ENCODE measurements at regions of chr15 and their contacts with region 1.

Region 1: GRCh38 chr15:92881802-92882696 is 18.1 kb upstream of the CHD2 start:
- DNase-seq: peak; percentile 98
- H3K4me3 Mint-ChIP-seq: peak overlapping the region; percentile 84
- H3K27ac Mint-ChIP-seq: peak overlapping the region; percentile 95
- H3K4me1 Mint-ChIP-seq: peaks cover 54% of the 10 kb centered on the region
- H3K27me3 Mint-ChIP-seq: no peaks in the 10 kb centered on the region

Region 2: DNA sequence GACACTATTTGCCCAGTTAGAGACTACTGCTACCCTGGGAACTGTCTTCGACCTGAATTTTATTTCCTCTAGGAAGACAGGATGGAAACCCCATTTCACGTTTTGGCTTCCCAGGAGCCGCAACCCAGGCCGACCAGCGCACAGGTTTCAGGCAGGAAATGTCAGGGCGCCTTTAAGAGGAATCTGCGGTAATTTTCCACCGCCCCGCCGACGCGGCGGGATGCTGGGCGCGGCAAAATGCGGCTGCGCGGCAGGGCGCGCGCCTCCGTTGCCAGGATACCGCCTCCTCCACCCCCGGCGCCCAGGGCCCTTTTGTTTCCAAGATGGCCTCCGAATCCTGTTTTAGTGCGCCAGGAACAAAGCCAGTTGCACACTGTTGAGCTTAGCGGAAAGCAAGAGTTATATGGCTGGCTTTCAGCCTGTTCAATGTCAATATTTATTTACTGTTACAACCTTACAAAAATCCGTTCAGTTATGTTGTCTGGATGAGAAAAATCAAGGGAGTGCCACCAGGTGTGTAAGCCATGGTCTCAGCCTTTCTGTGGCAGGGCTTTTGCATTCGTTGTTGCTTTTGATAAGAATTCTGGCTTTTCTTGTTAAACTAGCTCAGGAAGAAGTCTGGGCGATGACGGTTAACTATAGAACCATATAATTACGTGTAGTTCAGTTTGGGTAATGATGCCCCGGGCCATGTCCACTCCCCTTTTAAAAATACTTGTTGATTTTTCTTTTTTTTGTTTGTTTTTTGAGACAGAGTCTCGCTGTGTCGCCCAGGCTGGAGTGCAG is 61.6 kb before region 1 on chr15:
- CTCF ChIA-PET with region 1: interaction called, 4 read pairs
- POLR2A ChIA-PET with region 1: interaction called, 18 read pairs
- DNase-seq: peak; percentile 89
- H3K4me3 Mint-ChIP-seq: peak overlapping the region; percentile 80
- H3K27ac Mint-ChIP-seq: peak overlapping the region; percentile 85
- H3K4me1 Mint-ChIP-seq: peaks cover 67% of the 10 kb centered on the region
- H3K27me3 Mint-ChIP-seq: no peaks in the 10 kb centered on the region

Region 3: DNA sequence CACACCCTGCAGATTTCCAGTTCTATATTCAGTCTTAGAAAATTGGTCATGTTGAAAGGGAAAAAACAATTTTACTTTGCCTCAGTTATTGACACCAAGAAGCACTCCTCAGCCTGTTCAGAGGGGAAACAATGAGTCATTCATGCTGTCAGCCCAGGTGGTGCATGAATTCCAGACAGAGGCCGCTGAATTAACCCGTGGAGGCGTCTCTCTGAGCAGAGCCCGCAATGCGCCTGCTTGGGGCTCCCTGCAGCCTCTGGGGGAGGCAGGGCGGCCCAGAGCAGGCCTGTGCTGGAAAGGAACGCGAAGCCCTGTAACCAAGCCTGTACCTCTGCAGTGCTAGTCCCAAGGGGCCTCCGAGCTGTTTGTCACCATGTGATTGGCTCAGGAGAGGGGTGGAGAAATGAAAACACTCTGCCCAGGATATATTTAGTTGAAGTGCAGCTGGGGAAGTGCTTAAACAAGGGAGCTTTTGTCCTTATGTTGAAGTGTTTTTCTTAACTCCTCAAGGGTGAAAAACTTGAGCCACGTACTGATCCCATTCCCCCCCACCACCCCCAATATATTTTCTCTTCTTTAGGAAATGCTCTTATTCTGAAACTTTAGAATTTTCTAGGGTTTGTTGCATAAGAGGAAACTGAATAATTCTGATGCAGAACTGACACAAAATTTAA is 50.3 kb before region 1 on chr15:
- CTCF ChIA-PET with region 1: interaction called, 7 read pairs
- POLR2A ChIA-PET with region 1: interaction called, 38 read pairs
- DNase-seq: peak; percentile 93
- H3K4me3 Mint-ChIP-seq: peak overlapping the region; percentile 75
- H3K27ac Mint-ChIP-seq: peak overlapping the region; percentile 95
- H3K4me1 Mint-ChIP-seq: peaks cover 51% of the 10 kb centered on the region
- H3K27me3 Mint-ChIP-seq: no peaks in the 10 kb centered on the region

Region 4: GRCh38 chr15:92903941-92904831 is 22.1 kb after region 1 on chr15:
- CTCF ChIA-PET with region 1: interaction called, 9 read pairs
- POLR2A ChIA-PET with region 1: interaction called, 56 read pairs
- DNase-seq: peak; percentile 99
- H3K4me3 Mint-ChIP-seq: peak overlapping the region; percentile 80
- H3K27ac Mint-ChIP-seq: peak overlapping the region; percentile 99
- H3K4me1 Mint-ChIP-seq: peaks cover 59% of the 10 kb centered on the region
- H3K27me3 Mint-ChIP-seq: no peaks in the 10 kb centered on the region

Region 5: GRCh38 chr15:92954578-92954977 is 72.5 kb after region 1 on chr15:
- CTCF ChIA-PET with region 1: no interaction called
- POLR2A ChIA-PET with region 1: no interaction called
- DNase-seq: no peak
- H3K4me3 Mint-ChIP-seq: no peak overlapping the region
- H3K27ac Mint-ChIP-seq: no peak overlapping the region
- H3K4me1 Mint-ChIP-seq: peaks cover 17% of the 10 kb centered on the region
- H3K27me3 Mint-ChIP-seq: no peaks in the 10 kb centered on the region

Measured in activated CD4-positive, alpha-beta T cell treated with anti-CD3 and anti-CD28 coated beads, Interleukin-2, amount 10 ng/mL, durations not matched to agents 7 days and 5 days (primary cell).